AG04450 (cell line): ENCODE measurements at regions of chr2 and their contacts with region 1.

Region 1: GRCh38 chr2:178414266-178415247 is 36.4 kb downstream of the PRKRA start:
- DNase-seq: peak; percentile 88
- H3K4me3 ChIP-seq: peak overlapping the region; percentile 55
- H3K27ac ChIP-seq: no peak overlapping the region
- H3K27me3 ChIP-seq: no peaks in the 10 kb centered on the region
- CTCF ChIP-seq: peak; percentile 96

Region 2: GRCh38 chr2:178101321-178102079 is 313.1 kb before region 1 on chr2:
- CTCF ChIA-PET with region 1: interaction called, 14 read pairs
- POLR2A ChIA-PET with region 1: no interaction called
- DNase-seq: no peak
- H3K4me3 ChIP-seq: no peak overlapping the region
- H3K27ac ChIP-seq: no peak overlapping the region
- H3K27me3 ChIP-seq: no peaks in the 10 kb centered on the region
- CTCF ChIP-seq: no peak

Region 3: DNA sequence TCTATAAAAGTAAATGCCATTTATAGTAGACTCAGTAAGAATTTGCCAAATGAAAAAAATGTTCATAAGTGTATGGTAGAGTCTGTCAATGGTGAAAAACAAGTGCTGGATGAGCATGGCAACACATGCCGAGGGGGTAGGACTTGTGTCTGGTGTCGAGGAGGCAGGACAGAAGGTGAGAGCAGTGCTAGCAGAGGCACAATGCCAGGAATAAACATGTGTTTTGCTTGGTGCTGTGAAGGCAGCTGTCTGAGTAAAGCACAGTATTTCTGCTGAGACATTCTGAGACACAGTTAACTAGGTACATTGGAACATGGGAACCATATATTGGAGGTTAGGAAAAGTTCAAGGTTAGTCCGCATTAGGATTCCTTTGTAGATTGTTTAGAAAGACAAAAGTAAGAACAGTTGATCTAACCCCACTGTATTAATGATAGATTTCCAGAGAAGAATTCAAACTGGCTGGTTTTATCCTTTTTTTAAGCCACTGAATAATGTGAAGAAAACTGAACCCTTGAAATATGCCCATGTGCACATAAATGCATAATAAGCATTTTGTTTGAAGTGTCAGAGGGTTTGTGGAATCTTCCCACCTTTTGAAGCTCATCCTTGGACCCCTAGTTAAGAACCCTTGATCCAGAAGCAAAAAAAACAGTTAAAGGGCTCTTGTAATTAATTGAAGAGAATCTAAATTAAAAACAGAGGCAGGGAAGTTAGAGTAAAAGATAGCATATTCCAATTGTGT is 295.2 kb before region 1 on chr2:
- CTCF ChIA-PET with region 1: interaction called, 123 read pairs
- POLR2A ChIA-PET with region 1: interaction called, 7 read pairs
- DNase-seq: no peak
- H3K4me3 ChIP-seq: no peak overlapping the region
- H3K27ac ChIP-seq: no peak overlapping the region
- H3K27me3 ChIP-seq: no peaks in the 10 kb centered on the region
- CTCF ChIP-seq: no peak

Region 4: DNA sequence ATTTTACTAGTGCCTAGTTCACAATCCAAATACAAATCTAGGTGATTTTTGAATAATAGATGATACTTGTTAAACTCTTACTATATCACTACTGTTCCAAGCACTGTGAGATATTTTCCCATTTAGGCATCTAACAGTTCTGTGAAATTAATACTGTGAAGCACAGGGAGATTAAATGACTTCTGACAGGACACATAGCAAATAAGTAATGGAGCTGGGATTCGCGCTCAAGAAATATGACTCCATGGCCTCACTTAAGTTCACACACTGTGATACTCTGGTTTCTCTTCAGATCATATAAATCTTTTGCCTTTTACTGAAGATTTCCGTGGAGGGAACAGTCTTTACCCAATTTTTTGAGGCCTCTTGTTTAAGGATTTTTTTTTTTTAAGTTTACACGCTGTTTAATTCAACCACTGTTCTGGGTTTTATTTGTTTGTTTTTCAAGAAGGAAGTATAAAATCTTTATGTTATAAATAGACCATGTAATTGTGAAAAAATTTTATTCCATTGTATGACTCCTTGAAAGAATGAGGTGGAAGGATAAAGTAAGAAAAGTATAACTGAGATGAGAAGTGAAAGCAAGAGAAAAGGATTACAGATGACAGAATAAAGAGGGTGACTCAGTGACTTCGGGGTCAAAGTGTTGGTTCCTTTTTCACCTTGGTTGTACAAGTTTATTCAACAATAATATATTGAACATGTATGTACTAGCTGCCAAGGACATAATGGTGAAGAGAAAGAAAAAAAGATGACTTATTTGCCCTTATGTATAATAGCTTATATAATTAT is 272.1 kb before region 1 on chr2:
- CTCF ChIA-PET with region 1: interaction called, 292 read pairs
- POLR2A ChIA-PET with region 1: interaction called, 4 read pairs
- DNase-seq: no peak
- H3K4me3 ChIP-seq: no peak overlapping the region
- H3K27ac ChIP-seq: no peak overlapping the region
- H3K27me3 ChIP-seq: no peaks in the 10 kb centered on the region
- CTCF ChIP-seq: no peak

Region 5: DNA sequence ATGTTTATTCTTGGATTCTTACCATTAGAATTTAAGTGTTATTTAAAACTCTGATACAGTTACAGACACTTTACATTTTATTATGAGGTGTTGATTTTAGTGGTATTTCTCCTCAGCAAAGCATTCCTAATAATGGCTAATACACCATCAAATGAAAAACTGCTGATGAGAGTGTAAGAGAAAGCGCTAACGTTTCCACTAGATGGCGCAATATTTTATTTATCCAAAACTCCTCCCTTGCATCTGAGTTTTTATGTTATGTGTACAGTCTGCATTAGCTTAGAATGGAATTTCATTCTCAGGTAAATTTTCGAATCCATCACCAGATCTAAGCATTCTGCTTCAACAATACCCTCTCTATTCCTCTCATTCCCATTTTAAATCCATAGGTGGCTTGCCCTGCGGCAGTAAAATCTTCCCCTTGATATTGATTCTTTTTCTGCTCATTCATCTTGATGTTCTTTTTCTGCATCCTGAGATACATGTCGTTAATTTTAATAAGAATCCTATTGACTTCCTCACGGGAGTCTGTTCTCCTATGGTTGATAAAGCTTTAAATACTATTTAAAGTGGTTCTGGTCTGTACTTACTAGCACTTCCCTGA is 17.5 kb before region 1 on chr2:
- CTCF ChIA-PET with region 1: interaction called, 389 read pairs
- POLR2A ChIA-PET with region 1: interaction called, 3 read pairs
- DNase-seq: no peak
- H3K4me3 ChIP-seq: no peak overlapping the region
- H3K27ac ChIP-seq: no peak overlapping the region
- H3K27me3 ChIP-seq: no peaks in the 10 kb centered on the region
- CTCF ChIP-seq: peak; percentile 69

Region 6: GRCh38 chr2:178426388-178426787 is 11.8 kb after region 1 on chr2:
- CTCF ChIA-PET with region 1: interaction called, 29 read pairs
- POLR2A ChIA-PET with region 1: no interaction called
- DNase-seq: no peak
- H3K4me3 ChIP-seq: no peak overlapping the region
- H3K27ac ChIP-seq: no peak overlapping the region
- H3K27me3 ChIP-seq: no peaks in the 10 kb centered on the region
- CTCF ChIP-seq: no peak

Region 7: GRCh38 chr2:178450774-178451525 is 36.4 kb after region 1 on chr2 and contains the starts of genes PJVK and PRKRA:
- CTCF ChIA-PET with region 1: interaction called, 20 read pairs
- POLR2A ChIA-PET with region 1: interaction called, 9 read pairs
- DNase-seq: peak; percentile 95
- H3K4me3 ChIP-seq: peak within 1 kb of the TSS; percentile 86
- H3K27ac ChIP-seq: peak within 1 kb of the TSS; percentile 97
- H3K27me3 ChIP-seq: no peaks in the 10 kb centered on the region
- CTCF ChIP-seq: no peak
- polyA plus RNA-seq, gene PJVK: 2.1 and 3.4 TPM in 2 replicates
- polyA plus RNA-seq, gene PRKRA: 47.5 and 58.6 TPM in 2 replicates

Region 8: DNA sequence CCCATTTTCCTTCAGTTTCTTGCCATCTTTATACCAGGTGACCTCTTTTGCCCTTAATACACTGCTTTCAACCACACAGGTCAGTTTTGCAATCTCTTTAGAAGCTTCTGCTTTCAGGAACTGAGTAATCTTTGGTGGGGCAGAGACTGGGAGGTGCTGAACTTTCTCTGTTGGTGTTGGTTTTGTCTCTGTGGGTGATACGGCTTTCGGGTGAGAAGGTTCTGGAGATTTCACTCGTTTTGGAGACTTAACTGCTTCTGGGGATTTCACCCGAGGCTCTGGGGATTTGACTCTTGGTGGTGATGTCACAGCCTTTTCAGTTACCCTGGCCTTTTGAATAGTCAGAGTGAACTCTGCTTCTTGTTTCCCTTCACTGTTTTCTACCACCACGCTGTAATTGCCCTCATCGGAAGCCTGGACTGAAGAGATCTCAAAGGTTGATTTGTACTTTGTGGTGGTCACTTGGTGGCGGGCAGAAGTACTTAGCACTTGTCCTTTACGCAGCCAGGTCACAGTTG is 116.1 kb after region 1 on chr2:
- CTCF ChIA-PET with region 1: no interaction called
- POLR2A ChIA-PET with region 1: no interaction called
- DNase-seq: no peak
- H3K4me3 ChIP-seq: no peak overlapping the region
- H3K27ac ChIP-seq: no peak overlapping the region
- H3K27me3 ChIP-seq: no peaks in the 10 kb centered on the region
- CTCF ChIP-seq: no peak

Region 9: GRCh38 chr2:178579006-178579405 is 164.4 kb after region 1 on chr2:
- CTCF ChIA-PET with region 1: no interaction called
- POLR2A ChIA-PET with region 1: no interaction called
- DNase-seq: no peak
- H3K4me3 ChIP-seq: no peak overlapping the region
- H3K27ac ChIP-seq: no peak overlapping the region
- H3K27me3 ChIP-seq: no peaks in the 10 kb centered on the region
- CTCF ChIP-seq: no peak